Posterior vena cava (tissue), 2 donors: ENCODE measurements at regions of chr3 and their contacts with region 1.

Region 1: GRCh38 chr3:146218880-146219866 is 31.7 kb downstream of the PLSCR4 start:
- DNase-seq: no peak

Region 2: DNA sequence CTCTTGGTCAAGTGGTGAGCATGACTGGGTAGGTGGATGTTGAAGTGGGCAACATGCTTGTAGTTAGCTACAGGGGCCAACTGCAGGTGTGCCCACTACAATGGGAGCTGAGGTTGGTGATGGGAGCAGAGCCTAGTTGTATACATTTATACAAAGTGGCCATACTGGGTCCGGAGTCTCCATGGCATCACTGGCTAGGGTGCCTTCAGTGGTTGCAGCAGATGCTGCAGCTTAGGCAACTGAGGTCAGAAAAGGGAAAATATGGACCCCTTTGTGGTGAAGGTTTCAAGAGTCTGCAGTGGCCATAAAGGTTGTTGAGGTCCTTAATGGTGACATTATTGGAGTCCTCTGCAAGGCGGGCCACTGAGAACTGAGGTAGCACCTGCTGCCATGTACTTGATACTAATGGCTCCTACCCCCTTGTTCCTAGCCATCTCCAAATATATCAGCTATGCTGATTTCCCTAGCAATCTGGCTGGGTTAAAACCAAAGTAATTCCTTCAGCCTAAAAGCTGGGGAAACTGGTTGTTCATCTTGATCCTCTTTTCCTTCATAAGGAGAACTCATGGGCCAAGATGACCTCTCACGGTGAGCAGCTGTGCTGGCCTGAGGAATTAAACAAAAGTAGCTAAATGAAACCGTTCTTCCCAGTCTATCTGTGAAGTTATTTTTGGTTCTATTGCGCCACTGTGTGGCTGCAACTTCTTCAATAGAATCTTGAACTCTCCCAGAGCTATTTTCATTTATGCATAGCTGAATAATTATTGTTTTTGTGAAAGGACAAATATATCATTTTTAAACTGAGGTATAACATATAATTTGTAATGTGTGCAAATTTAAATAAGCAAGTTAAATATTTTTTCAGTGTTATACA is 107.7 kb after region 1 on chr3:
- intact Hi-C with region 1: loop called in 1 of 2 experiments (anchors 5 kb)
- DNase-seq: no peak

Region 3: GRCh38 chr3:146374146-146374545 is 155.0 kb after region 1 on chr3:
- intact Hi-C with region 1: no loop called
- DNase-seq: no peak